HepG2 (cell line): ENCODE measurements at regions of chr16 and their contacts with region 1.

Region 1: GRCh38 chr16:391885-392335 is 5.1 kb upstream of the NME4 start:
- DNase-seq: peak; percentile 60
- ATAC-seq: peak; percentile 87
- H3K4me3 ChIP-seq: no peak overlapping the region
- H3K27ac ChIP-seq: no peak overlapping the region
- H3K4me1 ChIP-seq: peaks cover 12% of the 10 kb centered on the region
- H3K27me3 ChIP-seq: no peaks in the 10 kb centered on the region
- CTCF ChIP-seq: peak; percentile 97
- EP300 ChIP-seq: no peak
- POLR2A ChIP-seq: no peak
- RAD21 ChIP-seq: peak; percentile 94

Region 2: GRCh38 chr16:380990-381788 is 10.7 kb before region 1 on chr16:
- CTCF ChIA-PET with region 1: no interaction called
- POLR2A ChIA-PET with region 1: no interaction called
- in situ Hi-C with region 1: no loop called
- intact Hi-C with region 1: no loop called
- DNase-seq: no peak
- ATAC-seq: peak; percentile 76
- H3K4me3 ChIP-seq: peak overlapping the region; percentile 85 to 94 (median 93)
- H3K27ac ChIP-seq: peak overlapping the region; percentile 68
- H3K4me1 ChIP-seq: peaks cover 38% of the 10 kb centered on the region
- H3K27me3 ChIP-seq: no peaks in the 10 kb centered on the region
- CTCF ChIP-seq: peak; percentile 23
- EP300 ChIP-seq: no peak
- POLR2A ChIP-seq: 0 out of 4 replicates have a peak, but pooled peaks of 1 of the 2 experiments have one; percentile 3
- RAD21 ChIP-seq: no peak

Region 3: GRCh38 chr16:483341-484075 is 91.6 kb after region 1 on chr16:
- CTCF ChIA-PET with region 1: interaction called, 11 read pairs
- POLR2A ChIA-PET with region 1: interaction called, 5 read pairs
- in situ Hi-C with region 1: no loop called
- intact Hi-C with region 1: no loop called
- DNase-seq: no peak
- ATAC-seq: no peak
- H3K4me3 ChIP-seq: no peak overlapping the region
- H3K27ac ChIP-seq: no peak overlapping the region
- H3K4me1 ChIP-seq: peaks cover 7% of the 10 kb centered on the region
- H3K27me3 ChIP-seq: no peaks in the 10 kb centered on the region
- CTCF ChIP-seq: no peak
- EP300 ChIP-seq: no peak
- POLR2A ChIP-seq: no peak
- RAD21 ChIP-seq: no peak

Region 4: DNA sequence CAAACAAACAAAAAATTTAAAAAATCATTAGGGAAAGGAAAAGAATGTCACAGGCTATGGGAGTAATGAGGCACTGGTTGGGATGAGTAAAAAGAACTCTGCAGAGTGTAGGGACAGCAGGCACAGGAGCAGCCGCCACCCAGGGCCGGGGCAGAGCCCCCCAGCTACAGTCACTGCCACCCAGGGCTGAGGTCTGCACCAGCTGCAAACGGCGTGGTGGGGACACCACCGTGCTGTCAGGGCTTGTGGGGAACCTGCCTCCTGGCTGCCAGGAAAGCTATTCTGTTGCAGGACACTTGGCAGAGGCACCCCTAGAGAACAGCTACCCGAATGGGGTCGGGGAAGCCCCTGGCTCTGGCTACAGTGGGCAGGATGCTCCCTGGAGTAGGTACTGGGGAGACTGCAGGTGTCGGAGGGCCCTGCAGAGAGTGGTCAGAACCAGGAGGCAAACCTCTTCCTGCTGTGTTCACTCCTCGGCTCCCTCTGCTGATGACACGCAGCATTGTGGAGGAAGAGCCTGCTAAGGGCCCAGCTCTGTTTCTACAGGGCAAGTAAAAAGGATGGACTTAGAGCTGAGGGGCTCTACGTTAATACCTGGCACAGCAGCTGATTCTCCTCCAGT is 103.3 kb after region 1 on chr16:
- CTCF ChIA-PET with region 1: interaction called, 11 read pairs
- POLR2A ChIA-PET with region 1: no interaction called
- in situ Hi-C with region 1: loop called (anchors 5 kb)
- intact Hi-C with region 1: loop called (anchors 5 kb)
- DNase-seq: peak; percentile 59
- ATAC-seq: peak; percentile 94
- H3K4me3 ChIP-seq: no peak overlapping the region
- H3K27ac ChIP-seq: no peak overlapping the region
- H3K4me1 ChIP-seq: peaks cover 15% of the 10 kb centered on the region
- H3K27me3 ChIP-seq: no peaks in the 10 kb centered on the region
- CTCF ChIP-seq: peak; percentile 71
- EP300 ChIP-seq: no peak
- POLR2A ChIP-seq: no peak
- RAD21 ChIP-seq: peak; percentile 67